ENCODE measurements at regions of chr18 and their contacts with region 1.

Region 1: DNA sequence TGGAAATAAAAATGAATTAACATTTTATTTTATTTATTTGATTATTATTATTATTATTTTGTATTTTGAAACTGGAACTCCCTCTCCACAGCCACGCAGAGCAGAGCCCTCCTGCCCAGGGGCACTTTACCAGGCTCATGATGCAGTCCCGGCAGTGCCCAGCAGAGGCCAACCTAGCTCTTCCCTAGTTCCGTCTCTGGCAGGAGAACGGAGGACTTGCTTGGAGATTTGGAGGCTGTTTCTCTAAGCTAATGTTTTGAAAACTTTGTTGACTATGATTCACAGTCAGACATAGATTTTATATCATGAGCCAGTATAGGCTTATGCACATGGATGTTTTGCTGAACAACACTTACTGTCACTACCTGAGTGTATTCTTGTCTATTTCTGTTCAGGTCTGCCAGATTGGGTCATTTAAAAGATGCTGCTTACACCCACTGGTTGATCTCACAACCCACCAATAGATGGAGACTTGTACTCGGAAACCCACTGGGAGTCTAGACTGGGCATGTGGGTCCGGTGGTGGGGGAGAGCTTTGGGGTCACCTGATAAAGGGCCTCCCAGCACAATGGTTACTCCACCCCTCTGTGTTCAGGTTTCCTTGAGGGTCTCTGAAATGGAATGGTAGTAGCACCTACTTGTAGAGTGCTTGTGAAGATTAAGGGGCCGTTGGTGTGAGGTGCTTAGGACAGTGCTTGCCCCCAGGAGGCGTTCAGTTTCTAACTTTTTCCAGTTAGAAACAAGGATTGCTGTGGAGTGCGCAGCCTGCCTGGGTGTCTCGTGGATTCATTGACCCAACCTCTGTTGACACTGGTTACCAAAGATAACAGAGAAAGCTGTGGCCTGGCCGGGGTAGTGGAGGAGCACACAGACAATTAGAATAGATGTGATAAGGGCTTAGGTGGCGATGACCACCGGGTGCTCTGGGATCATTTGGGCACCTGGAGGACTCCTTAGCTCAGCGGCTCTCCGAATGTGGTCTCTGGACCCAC is 177.3 kb downstream of the HAUS1 start:
- DNase-seq: peak; percentile 51 to 81
- ATAC-seq: peak; percentile 84 to 92 (median 84)
- H3K4me3 ChIP-seq: no peak overlapping the region
- H3K27ac ChIP-seq: no peak overlapping the region
- H3K4me1 ChIP-seq: peaks cover 23% of the 10 kb centered on the region
- H3K27me3 ChIP-seq: no peaks in the 10 kb centered on the region
- CTCF ChIP-seq: peak; percentile 96

Region 2: GRCh38 chr18:46424898-46425297 is 143.4 kb after region 1 on chr18:
- intact Hi-C with region 1: loop called in 1 of 2 experiments (anchors 10 kb)
- DNase-seq: no peak
- ATAC-seq: peak; percentile 18 to 66 (median 58)
- H3K4me3 ChIP-seq: no peak overlapping the region
- H3K27ac ChIP-seq: no peak overlapping the region
- H3K4me1 ChIP-seq: peaks cover 32% of the 10 kb centered on the region
- H3K27me3 ChIP-seq: no peaks in the 10 kb centered on the region
- CTCF ChIP-seq: no peak

Region 3: DNA sequence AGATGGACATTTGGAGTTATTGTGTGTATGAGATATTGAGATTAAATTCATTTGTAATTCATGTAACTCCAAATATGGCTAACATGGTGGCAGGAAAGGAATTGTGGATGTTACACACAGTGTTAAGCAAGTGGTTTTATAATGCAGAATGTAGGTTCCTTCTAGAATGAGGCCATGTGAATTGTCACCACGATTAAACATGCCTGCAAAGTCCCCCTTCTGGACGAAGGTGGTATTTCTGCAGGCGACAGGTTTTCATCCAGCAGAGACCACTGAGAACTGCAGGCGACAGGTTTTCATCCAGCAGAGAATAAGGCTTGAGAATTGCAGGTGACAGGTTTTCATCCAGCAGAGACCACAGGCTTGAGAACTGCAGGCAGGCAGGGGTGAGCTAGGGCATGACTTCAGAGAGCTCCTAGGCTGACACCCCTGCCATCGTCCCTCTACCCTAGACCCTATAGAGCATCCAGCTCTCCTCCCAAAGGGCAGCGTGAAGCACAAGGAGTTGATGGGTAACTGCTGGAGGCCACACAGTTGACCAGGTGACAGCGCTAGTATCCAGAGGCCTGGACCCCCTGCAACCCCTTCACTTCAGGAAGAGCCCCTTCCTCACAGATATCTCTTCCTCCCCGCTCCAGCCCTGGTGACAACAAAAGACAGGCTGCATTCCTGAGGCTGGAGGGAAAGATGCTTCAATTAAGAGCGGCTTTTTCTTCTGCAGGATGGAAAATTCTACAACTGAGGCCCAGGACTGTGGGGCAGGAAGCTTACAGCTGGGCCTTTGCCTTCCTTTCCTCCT is 199.8 kb after region 1 on chr18:
- intact Hi-C with region 1: loop called (anchors 5 to 10 kb)
- DNase-seq: no peak
- ATAC-seq: peak in 3 of 4 donors; percentile 50 to 60 (median 53)
- H3K4me3 ChIP-seq: no peak overlapping the region
- H3K27ac ChIP-seq: no peak overlapping the region
- H3K4me1 ChIP-seq: no peaks in the 10 kb centered on the region
- H3K27me3 ChIP-seq: no peaks in the 10 kb centered on the region
- CTCF ChIP-seq: peak; percentile 66

Region 4: DNA sequence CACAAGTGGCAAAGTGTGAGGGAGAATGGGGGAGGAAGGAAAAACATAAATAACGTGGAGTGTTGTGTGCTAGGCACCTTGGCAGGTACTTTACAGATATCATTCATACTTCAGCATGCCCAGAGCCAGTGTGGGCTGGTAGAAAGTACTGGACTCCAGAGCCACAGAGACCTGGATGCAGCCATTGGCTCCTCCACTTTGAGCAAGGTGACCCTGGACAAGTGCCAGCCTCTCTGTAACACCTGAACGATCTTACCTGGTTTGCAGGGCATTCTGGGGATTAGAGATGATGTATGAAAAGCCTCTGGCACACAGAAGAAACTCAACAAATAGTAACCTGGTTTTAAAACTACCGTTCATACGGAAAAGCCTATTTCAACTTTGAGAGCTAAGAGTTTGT is 369.2 kb after region 1 on chr18:
- intact Hi-C with region 1: loop called (anchors 5 kb)
- DNase-seq: no peak
- ATAC-seq: no peak
- H3K4me3 ChIP-seq: no peak overlapping the region
- H3K27ac ChIP-seq: no peak overlapping the region
- H3K4me1 ChIP-seq: no peaks in the 10 kb centered on the region
- H3K27me3 ChIP-seq: no peaks in the 10 kb centered on the region
- CTCF ChIP-seq: no peak

Region 5: DNA sequence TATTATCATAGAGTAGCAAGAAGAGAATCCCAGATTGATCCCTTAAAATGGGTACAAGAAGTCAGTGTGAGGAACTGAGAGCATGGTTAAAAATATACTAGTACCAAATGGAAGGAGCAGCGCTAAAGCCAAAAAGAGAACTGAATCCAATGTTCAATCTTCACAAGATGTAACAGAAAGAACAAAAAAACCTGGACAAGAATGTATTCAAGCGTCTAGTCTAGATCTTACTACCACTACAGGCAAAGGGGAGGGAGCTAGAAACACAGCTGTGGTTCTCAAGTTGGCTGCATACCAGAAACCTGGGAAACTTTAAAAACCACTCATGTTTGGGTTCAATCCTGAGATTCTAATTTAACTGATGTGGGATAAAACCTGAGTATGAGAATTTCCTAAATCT is 578.4 kb after region 1 on chr18:
- intact Hi-C with region 1: no loop called
- DNase-seq: no peak
- ATAC-seq: no peak
- H3K4me3 ChIP-seq: no peak overlapping the region
- H3K27ac ChIP-seq: no peak overlapping the region
- H3K4me1 ChIP-seq: no peaks in the 10 kb centered on the region
- H3K27me3 ChIP-seq: no peaks in the 10 kb centered on the region
- CTCF ChIP-seq: no peak